GM13977 (cell line): ENCODE measurements at regions of chr9 and their contacts with region 1.

Region 1: DNA sequence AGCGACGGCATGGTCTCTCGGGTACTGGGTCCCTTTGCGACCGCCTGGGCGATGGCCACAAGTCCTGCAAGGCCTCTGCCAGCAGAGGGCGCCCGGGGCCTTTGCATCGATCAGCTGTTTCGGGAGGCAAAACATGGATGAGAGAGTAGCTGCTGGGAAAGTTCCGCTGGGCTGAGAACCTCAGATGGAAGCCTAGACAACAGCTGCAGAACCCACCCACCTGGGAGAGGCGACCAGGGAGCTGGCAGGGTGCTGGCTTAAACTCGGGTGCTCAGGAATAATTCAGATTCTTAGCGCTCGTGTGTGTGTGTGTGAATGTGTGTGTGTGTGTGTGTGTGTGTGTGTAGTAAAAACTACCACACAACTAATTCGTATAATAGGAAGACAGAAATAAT is 50.0 kb downstream of the TRIM32 start:
- DNase-seq: peak; percentile 83
- CTCF ChIP-seq: peak; percentile 98

Region 2: GRCh38 chr9:116855883-116856662 is 118.9 kb after region 1 on chr9:
- in situ Hi-C with region 1: loop called (anchors 10 kb)
- DNase-seq: no peak
- CTCF ChIP-seq: no peak